Psoas muscle (tissue), 8 donors: ENCODE measurements at regions of chr18 and their contacts with region 1.

Region 1: GRCh38 chr18:23683671-23684070 is 5.6 kb upstream of the LAMA3 start:
- DNase-seq: no peak
- ATAC-seq: no peak
- H3K4me3 ChIP-seq: no peak overlapping the region
- H3K27ac ChIP-seq: no peak overlapping the region
- H3K4me1 ChIP-seq: no peaks in the 10 kb centered on the region
- H3K27me3 ChIP-seq: peaks cover 0 to 10% (median 7%) of the 10 kb centered on the region in 3 donors
- CTCF ChIP-seq: no peak

Region 2: DNA sequence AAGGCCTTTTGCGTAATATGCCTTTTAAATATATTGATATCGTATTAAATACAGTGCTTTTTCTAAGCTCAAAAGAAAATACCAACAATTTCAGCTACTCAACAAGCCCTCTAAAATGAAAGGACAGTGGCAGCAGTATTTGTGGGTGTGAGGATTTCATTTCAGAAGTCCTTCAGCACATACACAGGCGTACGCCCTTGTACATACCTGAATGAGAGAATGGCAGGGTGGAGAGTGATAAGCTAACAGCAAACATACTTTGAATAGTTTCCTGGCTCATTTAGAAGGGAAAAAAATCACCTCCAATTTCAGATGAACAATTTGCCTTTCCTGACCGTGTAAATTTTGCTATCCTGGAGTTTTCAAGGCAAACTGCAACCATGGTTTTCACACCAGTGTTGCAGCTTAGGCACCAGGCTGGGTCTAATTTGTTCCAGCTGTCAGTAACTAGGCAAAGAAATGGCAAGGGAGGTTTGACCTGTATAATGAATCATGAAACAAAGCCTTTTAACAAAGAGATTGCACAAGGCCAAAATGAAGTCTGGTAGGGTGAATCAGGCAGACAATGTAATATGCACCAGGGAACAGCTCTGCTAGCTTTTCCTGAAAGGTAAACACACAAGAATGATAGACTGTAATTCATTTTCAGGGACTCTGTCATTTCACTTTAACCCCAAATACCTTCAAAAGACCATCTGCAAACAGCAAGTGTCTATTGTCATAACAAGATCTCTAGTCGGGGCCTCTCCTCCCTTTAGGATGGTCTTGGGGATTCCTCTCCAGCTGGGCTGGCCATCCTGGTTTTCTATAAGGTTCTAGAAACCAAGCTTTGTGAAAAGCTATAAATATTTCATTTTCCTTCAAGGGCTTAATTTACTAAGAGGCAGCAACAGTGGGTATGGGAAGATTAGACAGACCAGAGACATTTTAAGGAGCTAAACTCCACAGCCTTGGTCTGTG is 32.4 kb before region 1 on chr18:
- intact Hi-C with region 1: no loop called
- DNase-seq: no peak
- ATAC-seq: peak in 2 of 4 donors; percentile 31 to 35
- H3K4me3 ChIP-seq: no peak overlapping the region
- H3K27ac ChIP-seq: no peak overlapping the region
- H3K4me1 ChIP-seq: no peaks in the 10 kb centered on the region
- H3K27me3 ChIP-seq: no peaks in the 10 kb centered on the region
- CTCF ChIP-seq: no peak

Region 3: DNA sequence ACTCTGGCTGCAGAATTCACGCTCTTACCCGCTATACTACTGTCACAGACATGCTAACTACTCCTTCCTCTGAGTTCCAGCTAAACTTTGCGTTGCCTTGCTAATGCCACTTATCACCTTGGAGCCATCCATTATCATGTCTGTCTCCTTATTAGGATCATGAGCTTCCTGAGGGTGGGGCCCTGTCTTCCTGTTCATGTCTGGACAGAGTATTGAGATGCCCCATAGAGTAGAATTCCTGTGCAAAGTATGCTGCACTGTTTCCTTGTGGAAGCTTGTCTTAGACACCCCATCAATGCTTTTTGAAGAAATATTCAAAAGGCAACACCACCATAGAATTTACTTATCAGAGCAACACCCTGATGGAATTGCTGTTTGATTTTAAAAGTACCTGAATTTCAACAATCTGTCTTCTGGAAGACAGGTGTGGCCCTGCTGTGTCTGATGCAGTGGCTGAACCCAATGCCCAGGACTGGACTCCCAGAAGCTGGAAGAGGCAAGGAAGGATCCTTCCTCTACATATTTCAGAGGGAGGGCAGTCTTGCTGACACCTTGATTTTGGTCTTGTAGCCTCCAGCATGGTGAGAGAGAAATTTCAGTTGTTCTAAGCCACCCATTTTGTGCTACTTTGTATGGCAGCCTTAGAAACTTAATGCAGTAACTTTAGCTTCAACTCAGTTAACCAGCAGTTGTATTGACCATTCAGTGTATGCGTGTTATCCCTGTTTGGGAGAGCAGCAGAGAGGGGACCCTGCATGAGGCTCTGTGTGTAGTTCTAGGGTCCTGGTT is 11.2 kb after region 1 on chr18:
- intact Hi-C with region 1: no loop called
- DNase-seq: no peak
- ATAC-seq: no peak
- H3K4me3 ChIP-seq: no peak overlapping the region
- H3K27ac ChIP-seq: no peak overlapping the region
- H3K4me1 ChIP-seq: no peaks in the 10 kb centered on the region
- H3K27me3 ChIP-seq: peaks cover 0 to 12% (median 0%) of the 10 kb centered on the region in 3 donors
- CTCF ChIP-seq: no peak

Region 4: GRCh38 chr18:23710068-23710527 is 26.4 kb after region 1 on chr18:
- intact Hi-C with region 1: loop called in 1 of 2 experiments (anchors 2 kb)
- DNase-seq: no peak
- ATAC-seq: no peak
- H3K4me3 ChIP-seq: no peak overlapping the region
- H3K27ac ChIP-seq: no peak overlapping the region
- H3K4me1 ChIP-seq: no peaks in the 10 kb centered on the region
- H3K27me3 ChIP-seq: peaks cover 0 to 2% (median 0%) of the 10 kb centered on the region in 3 donors
- CTCF ChIP-seq: no peak